Activated CD4-positive, alpha-beta T cell treated with anti-CD3 and anti-CD28 coated beads for 36 hours (primary cell): ENCODE measurements at regions of chr10 and their contacts with region 1.

Region 1: DNA sequence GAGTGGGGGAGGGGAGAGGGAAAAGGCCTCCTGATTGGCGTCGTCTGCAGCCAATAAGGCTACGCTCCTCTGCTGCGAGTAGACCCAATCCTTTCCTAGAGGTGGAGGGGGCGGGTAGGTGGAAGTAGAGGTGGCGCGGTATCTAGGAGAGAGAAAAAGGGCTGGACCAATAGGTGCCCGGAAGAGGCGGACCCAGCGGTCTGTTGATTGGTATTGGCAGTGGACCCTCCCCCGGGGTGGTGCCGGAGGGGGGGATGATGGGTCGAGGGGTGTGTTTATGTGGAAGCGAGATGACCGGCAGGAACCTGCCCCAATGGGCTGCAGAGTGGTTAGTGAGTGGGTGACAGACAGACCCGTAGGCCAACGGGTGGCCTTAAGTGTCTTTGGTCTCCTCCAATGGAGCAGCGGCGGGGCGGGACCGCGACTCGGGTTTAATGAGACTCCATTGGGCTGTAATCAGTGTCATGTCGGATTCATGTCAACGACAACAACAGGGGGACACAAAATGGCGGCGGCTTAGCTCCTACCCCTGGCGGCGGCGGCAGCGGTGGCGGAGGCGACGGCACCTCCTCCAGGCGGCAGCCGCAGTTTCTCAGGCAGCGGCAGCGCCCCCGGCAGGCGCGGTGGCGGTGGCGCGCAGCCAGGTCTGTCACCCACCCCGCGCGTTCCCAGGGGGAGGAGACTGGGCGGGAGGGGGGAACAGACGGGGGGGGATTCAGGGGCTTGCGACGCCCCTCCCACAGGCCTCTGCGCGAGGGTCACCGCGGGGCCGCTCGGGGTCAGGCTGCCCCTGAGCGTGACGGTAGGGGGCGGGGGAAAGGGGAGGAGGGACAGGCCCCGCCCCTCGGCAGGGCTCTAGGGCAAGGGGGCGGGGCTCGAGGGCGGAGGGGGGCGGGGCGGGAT is at the start of gene KAT6B:
- DNase-seq: peak; percentile 100
- ATAC-seq: peak; percentile 89
- H3K4me3 Mint-ChIP-seq: peak within 1 kb of the TSS; percentile 88
- H3K27ac Mint-ChIP-seq: peak within 1 kb of the TSS; percentile 84
- H3K4me1 Mint-ChIP-seq: peaks cover 70% of the 10 kb centered on the region
- H3K27me3 Mint-ChIP-seq: no peaks in the 10 kb centered on the region
- total RNA-seq, gene KAT6B: 20.0 to 20.9 TPM

Region 2: DNA sequence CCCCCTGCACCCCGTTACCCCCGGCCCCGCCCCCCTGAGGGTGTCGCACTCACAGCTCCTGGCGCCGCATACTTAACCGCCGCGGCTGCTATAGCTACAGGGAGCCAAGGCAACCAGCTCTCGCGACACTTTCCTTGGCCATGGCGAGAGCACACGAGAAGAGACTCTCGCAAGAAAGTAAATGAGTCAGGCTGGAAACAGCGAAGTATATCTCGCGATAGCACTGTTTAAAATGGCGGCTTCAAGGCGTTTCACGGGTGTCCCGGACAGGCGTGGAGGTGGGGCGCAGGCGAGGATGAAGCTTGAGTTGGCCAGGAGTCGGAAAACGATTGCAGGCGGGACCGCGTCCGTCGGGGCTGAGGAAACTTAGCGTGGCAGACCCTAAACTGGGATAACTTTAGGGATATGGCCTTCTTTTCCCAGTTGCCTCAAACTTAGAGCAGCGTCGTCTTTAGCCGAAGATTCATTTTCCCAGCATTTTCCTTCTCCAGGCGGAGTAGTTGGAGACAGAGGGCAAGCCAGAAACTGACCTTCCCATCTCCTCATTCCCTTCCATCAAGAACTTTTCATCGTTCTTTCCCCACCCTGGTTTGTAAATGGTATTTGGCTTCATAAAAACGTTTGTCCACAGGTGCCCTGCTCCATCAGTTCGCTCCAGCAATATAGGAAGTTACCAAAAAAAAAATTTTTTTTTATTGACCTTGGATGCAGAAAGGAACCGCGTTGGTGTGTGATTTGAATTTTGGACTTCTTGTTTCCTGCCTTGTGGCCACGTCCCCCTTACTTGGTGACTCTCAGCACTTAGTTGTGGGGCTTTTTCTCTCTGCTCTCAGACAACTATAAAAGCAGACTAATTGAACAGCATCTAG is 1200.3 kb before region 1 on chr10:
- CTCF ChIA-PET with region 1: no interaction called
- POLR2A ChIA-PET with region 1: no interaction called
- intact Hi-C with region 1: loop called in 1 of 2 experiments (anchors 5 kb)
- DNase-seq: peak; percentile 97
- ATAC-seq: peak; percentile 99
- H3K4me3 Mint-ChIP-seq: peak overlapping the region; percentile 96
- H3K27ac Mint-ChIP-seq: peak overlapping the region; percentile 98
- H3K4me1 Mint-ChIP-seq: peaks cover 19% of the 10 kb centered on the region
- H3K27me3 Mint-ChIP-seq: no peaks in the 10 kb centered on the region

Region 3: DNA sequence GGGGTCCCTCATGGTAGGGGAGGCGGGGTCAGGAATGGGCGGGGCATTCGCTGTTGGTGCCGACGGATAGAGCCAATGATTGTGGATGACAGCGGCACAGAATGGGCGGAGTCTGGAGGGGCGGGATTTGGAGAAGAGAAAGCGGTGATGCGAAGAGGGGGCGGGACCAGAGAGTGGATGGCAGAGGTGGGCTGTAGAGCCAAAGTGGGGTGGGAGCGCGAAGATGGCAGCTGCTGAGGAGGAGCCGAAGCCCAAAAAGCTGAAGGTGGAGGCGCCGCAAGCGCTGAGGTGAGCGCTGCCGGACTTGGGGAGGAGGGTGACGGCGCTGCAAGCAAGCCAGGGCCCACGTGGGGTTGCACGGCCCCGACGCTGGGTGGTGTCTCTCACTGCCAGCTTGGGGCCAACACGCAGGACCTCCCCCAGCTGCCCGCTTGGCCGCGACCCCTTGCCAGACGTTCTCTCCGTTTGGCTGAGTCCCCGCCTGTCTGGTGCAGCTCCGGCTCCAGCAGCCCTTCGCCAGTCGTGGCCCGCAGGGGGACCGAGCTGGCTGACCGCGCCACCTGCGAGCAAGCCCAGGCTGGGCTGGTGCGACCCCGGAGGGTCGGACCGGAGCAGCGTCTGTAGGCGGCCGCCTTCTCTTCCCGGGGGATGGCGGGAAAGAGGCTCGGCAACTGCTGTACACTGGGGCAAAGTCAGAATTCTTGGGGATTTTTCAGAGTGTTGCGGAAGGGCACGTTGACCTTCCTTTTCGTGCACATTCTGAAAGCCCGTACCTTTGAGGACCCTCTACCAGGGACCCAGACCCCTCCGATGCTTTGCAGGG is 675.1 kb before region 1 on chr10 and contains the start of gene ADK:
- CTCF ChIA-PET with region 1: no interaction called
- POLR2A ChIA-PET with region 1: no interaction called
- intact Hi-C with region 1: loop called (anchors 1 to 2 kb)
- DNase-seq: peak; percentile 100
- ATAC-seq: peak; percentile 97
- H3K4me3 Mint-ChIP-seq: no peak within 1 kb of the TSS
- H3K27ac Mint-ChIP-seq: peak within 1 kb of the TSS; percentile 85
- H3K4me1 Mint-ChIP-seq: peaks cover 45% of the 10 kb centered on the region
- H3K27me3 Mint-ChIP-seq: no peaks in the 10 kb centered on the region
- total RNA-seq, gene ADK: 53.7 to 55.0 TPM

Region 4: GRCh38 chr10:74589226-74589673 is 237.1 kb before region 1 on chr10:
- CTCF ChIA-PET with region 1: no interaction called
- POLR2A ChIA-PET with region 1: interaction called, 3 read pairs
- intact Hi-C with region 1: loop called (anchors 1 kb)
- DNase-seq: peak; percentile 93
- ATAC-seq: peak; percentile 54
- H3K4me3 Mint-ChIP-seq: no peak overlapping the region
- H3K27ac Mint-ChIP-seq: peak overlapping the region; percentile 85
- H3K4me1 Mint-ChIP-seq: peaks cover 69% of the 10 kb centered on the region
- H3K27me3 Mint-ChIP-seq: no peaks in the 10 kb centered on the region

Region 5: DNA sequence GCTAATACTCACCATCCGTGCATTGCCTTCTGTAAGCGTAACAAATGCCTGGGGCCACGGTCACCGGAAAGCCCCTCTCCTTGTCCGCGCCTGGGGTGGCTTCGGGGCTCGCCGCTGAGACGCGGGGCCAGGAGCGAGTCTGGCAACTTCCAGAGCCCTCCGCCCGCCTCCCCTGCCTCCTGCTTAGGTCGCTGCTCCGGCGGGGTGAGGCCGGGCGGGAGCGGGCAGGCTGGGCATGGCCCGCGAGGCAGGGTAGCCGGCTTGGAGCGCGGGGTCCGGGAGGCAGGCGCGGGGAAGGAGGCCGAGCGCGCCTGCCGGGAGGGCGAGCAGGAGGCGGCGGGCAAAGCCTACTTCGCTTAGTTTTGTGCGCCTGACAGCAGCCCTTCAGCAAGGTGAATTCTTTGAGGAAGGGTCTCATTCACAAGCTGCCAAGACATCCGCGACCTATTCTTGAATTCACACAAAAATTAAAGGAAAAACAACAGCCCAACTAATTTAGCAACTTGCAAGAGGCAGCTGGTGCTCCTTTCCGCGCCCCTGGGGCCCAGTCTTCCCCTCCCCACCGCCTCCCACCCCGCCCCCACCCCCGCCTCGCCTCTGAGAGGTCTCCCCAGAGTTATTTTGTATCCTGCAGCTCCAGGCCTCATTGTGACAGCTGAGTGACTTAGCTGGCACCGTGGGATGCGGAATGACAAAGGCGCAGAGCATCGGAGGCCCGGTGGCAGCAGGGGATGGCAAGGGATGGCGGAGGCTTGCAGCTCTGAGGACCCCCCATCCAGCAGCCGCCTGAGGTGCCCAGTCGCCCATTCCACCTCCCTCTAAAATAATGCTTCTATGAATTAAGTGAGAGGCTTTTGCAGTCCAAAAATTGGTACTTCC is 12.8 kb before region 1 on chr10:
- CTCF ChIA-PET with region 1: no interaction called
- POLR2A ChIA-PET with region 1: no interaction called
- intact Hi-C with region 1: no loop called
- DNase-seq: no peak
- ATAC-seq: no peak
- H3K4me3 Mint-ChIP-seq: no peak overlapping the region
- H3K27ac Mint-ChIP-seq: no peak overlapping the region
- H3K4me1 Mint-ChIP-seq: peaks cover 2% of the 10 kb centered on the region
- H3K27me3 Mint-ChIP-seq: no peaks in the 10 kb centered on the region

Region 6: GRCh38 chr10:74977913-74978847 is 151.8 kb after region 1 on chr10:
- CTCF ChIA-PET with region 1: no interaction called
- POLR2A ChIA-PET with region 1: no interaction called
- intact Hi-C with region 1: loop called (anchors 1 to 10 kb)
- DNase-seq: peak; percentile 68
- ATAC-seq: peak; percentile 84
- H3K4me3 Mint-ChIP-seq: peak overlapping the region; percentile 6
- H3K27ac Mint-ChIP-seq: peak overlapping the region; percentile 65
- H3K4me1 Mint-ChIP-seq: peaks cover 31% of the 10 kb centered on the region
- H3K27me3 Mint-ChIP-seq: no peaks in the 10 kb centered on the region

Region 7: DNA sequence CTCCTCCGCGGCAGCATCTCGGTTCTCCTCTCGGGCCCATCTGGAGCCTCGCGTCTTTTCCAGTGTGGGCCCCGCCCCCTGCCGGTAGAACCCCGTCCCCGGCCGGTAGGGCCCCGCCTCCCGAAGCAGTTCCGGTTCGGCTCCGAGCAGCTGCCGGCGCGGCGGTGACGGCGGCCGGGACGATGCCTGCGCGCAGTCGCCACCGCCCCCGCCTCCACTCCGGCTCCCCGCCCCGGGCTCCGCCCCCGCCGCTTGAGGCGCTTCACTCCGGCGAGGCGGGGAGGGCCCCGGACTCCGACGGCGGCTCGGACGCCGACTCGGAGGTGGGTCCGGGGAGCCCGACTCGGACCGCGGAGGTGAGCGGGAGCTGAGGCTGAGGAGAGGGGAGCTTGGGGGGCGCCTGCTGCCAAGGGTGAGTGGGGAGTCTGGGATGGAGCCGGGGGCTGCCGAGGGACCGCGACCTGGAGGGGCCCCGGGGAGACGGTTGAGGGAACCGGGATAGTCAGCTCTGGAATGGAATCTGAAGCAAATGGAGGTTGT is 285.0 kb after region 1 on chr10 and contains the start of gene SAMD8:
- CTCF ChIA-PET with region 1: interaction called, 3 read pairs
- POLR2A ChIA-PET with region 1: no interaction called
- intact Hi-C with region 1: loop called (anchors 1 kb)
- DNase-seq: peak; percentile 99
- ATAC-seq: peak; percentile 90
- H3K4me3 Mint-ChIP-seq: peak within 1 kb of the TSS; percentile 99
- H3K27ac Mint-ChIP-seq: peak within 1 kb of the TSS; percentile 99
- H3K4me1 Mint-ChIP-seq: peaks cover 51% of the 10 kb centered on the region
- H3K27me3 Mint-ChIP-seq: no peaks in the 10 kb centered on the region
- total RNA-seq, gene SAMD8: 20.5 to 20.9 TPM